A673 (cell line): ENCODE measurements at regions of chr6 and their contacts with region 1.

Region 1: GRCh38 chr6:39361657-39362486 is 39.4 kb upstream of the KCNK16 start:
- DNase-seq: peak; percentile 80
- H3K4me3 ChIP-seq: no peak overlapping the region
- H3K27ac ChIP-seq: peak overlapping the region; percentile 63
- H3K4me1 ChIP-seq: peaks cover 21% of the 10 kb centered on the region
- H3K27me3 ChIP-seq: no peaks in the 10 kb centered on the region
- CTCF ChIP-seq: peak; percentile 58

Region 2: DNA sequence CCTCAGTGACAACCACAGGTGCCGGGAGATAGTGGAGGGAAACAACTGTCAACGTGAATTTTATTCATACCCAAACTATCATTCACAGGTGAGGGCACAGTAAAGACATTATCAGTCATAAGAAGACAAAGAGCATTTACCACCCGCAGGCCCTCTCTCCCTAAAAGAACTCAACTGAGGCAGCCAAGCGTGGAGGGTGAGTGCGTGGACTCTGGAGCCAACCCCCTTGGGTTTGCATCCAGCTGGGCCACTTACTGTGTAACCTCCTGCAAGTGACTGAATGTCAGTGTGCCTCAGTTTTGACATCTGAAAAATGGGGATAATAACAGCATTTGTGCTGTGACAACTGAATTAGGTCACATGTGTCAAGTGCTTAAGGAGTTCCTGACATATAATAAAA is 31.2 kb after region 1 on chr6:
- CTCF ChIA-PET with region 1: no interaction called
- POLR2A ChIA-PET with region 1: no interaction called
- intact Hi-C with region 1: no loop called
- DNase-seq: no peak
- H3K4me3 ChIP-seq: no peak overlapping the region
- H3K27ac ChIP-seq: no peak overlapping the region
- H3K4me1 ChIP-seq: no peaks in the 10 kb centered on the region
- H3K27me3 ChIP-seq: no peaks in the 10 kb centered on the region
- CTCF ChIP-seq: no peak

Region 3: DNA sequence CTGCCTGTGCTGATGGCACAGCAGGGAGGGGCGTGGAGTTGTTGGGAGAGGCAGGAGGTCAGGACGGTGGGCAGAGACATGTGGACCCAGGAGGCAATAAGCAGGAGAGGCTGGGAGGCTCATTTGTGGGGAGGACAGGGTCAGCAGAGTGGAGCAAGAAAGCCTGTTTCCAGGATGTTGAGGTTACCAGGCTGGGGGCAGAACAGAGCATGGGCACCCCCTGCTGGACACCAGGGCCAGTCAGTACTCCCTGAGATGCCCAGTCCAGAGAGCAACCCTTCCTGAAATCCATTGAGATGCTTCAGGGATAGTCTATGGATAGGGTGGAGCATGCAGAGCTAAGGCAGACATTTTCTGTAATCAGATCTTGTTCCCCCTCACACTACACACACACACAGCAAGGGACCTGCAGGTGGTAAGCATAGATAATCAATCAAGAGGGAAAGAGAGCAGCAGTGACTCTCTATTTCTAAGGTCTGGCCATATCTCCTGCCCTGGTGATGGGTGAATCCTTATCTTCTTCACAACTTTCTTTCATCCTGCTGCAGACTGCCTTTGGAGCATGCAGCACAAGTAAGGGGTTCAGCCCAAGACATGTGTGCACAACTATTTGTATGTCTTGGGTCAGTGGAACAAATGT is 530.7 kb after region 1 on chr6:
- CTCF ChIA-PET with region 1: interaction called, 5 read pairs
- POLR2A ChIA-PET with region 1: no interaction called
- intact Hi-C with region 1: loop called (anchors 1 kb)
- DNase-seq: peak; percentile 48
- H3K4me3 ChIP-seq: no peak overlapping the region
- H3K27ac ChIP-seq: no peak overlapping the region
- H3K4me1 ChIP-seq: no peaks in the 10 kb centered on the region
- H3K27me3 ChIP-seq: no peaks in the 10 kb centered on the region
- CTCF ChIP-seq: peak; percentile 61

Region 4: GRCh38 chr6:40308533-40309306 is 946.8 kb after region 1 on chr6:
- CTCF ChIA-PET with region 1: interaction called, 3 read pairs
- POLR2A ChIA-PET with region 1: no interaction called
- intact Hi-C with region 1: loop called (anchors 5 kb)
- DNase-seq: peak; percentile 83
- H3K4me3 ChIP-seq: no peak overlapping the region
- H3K27ac ChIP-seq: no peak overlapping the region
- H3K4me1 ChIP-seq: no peaks in the 10 kb centered on the region
- H3K27me3 ChIP-seq: no peaks in the 10 kb centered on the region
- CTCF ChIP-seq: peak; percentile 90

Region 5: GRCh38 chr6:40845553-40845952 is 1483.7 kb after region 1 on chr6:
- CTCF ChIA-PET with region 1: no interaction called
- POLR2A ChIA-PET with region 1: no interaction called
- intact Hi-C with region 1: loop called (anchors 5 kb)
- DNase-seq: peak; percentile 71
- H3K4me3 ChIP-seq: no peak overlapping the region
- H3K27ac ChIP-seq: no peak overlapping the region
- H3K4me1 ChIP-seq: peaks cover 30% of the 10 kb centered on the region
- H3K27me3 ChIP-seq: no peaks in the 10 kb centered on the region
- CTCF ChIP-seq: peak; percentile 79

Region 6: DNA sequence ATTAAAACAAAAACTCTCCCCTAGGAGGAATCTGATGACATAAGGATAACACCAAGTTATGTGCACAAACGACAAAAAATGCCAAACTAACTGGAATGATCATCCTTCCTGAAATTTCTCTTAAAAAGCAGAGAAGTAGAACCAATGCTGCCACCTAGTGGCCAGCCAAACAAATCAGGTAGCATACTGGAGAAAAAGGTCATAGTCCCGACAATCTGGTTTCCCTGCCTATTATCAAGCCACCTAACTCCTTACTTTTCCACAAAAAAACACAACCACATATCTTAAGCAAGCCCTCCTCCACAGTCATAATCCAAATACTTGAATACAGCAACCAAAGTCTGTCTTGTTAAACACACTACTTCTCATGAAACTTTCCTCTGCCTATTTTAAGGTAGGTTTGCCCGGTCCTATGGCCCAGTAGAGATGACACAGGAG is 1705.0 kb after region 1 on chr6:
- CTCF ChIA-PET with region 1: no interaction called
- POLR2A ChIA-PET with region 1: no interaction called
- intact Hi-C with region 1: loop called (anchors 10 kb)
- DNase-seq: peak; percentile 77
- H3K4me3 ChIP-seq: no peak overlapping the region
- H3K27ac ChIP-seq: no peak overlapping the region
- H3K4me1 ChIP-seq: peaks cover 11% of the 10 kb centered on the region
- H3K27me3 ChIP-seq: no peaks in the 10 kb centered on the region
- CTCF ChIP-seq: peak; percentile 87